ENCODE measurements at regions of chr1 and their contacts with region 1.

Region 1: GRCh38 chr1:204128964-204129896 is 22.6 kb downstream of the ETNK2 start:
- DNase-seq: peak; percentile 29
- H3K4me3 ChIP-seq: no peak overlapping the region
- H3K27ac ChIP-seq: no peak overlapping the region
- H3K27me3 ChIP-seq: no peaks in the 10 kb centered on the region
- CTCF ChIP-seq: peak; percentile 89

Region 2: DNA sequence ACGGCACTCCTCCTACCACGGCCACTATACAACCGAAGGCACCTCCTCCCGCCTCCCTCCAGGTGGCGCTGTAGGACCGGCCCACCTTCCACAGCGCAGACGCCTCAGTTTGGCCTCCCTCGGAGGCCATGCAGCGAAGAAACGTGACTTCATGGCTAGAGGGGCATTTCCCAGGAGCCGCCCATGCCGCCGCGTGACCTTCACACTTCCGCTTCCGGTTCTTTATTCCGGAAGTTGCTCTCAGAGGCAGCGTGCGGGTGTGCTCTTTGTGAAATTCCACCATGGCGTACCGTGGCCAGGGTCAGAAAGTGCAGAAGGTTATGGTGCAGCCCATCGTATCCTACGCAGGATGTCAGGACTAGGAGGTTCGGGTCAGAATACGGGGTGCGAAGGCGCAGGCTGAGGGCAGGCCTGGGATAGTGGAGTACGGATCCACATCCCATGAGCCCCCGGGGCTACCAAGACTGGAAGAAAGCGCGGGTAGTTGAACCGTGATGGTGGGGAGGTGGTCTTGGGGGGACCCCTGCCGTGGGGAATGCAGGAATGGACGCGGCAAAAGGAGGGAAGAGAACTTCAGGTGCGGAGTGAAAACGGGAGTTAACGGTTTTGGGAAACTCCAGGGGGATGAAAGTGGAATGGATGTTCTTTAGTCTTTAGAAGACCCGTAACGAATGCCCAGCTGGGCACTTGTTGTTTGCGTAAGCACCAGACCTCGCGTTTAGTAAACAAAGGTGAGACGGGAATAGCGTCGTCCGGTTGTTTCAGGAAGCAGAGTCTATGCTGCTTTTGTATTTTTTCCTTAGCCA is 267.6 kb before region 1 on chr1 and contains the start of gene SNRPE:
- in situ Hi-C with region 1: loop called (anchors 25 kb)
- DNase-seq: peak; percentile 96
- H3K4me3 ChIP-seq: peak within 1 kb of the TSS; percentile 99
- H3K27ac ChIP-seq: peak within 1 kb of the TSS; percentile 82
- H3K27me3 ChIP-seq: no peaks in the 10 kb centered on the region
- CTCF ChIP-seq: peak; percentile 93